HCT116 (cell line): ENCODE measurements at regions of chr15 and their contacts with region 1.

Region 1: DNA sequence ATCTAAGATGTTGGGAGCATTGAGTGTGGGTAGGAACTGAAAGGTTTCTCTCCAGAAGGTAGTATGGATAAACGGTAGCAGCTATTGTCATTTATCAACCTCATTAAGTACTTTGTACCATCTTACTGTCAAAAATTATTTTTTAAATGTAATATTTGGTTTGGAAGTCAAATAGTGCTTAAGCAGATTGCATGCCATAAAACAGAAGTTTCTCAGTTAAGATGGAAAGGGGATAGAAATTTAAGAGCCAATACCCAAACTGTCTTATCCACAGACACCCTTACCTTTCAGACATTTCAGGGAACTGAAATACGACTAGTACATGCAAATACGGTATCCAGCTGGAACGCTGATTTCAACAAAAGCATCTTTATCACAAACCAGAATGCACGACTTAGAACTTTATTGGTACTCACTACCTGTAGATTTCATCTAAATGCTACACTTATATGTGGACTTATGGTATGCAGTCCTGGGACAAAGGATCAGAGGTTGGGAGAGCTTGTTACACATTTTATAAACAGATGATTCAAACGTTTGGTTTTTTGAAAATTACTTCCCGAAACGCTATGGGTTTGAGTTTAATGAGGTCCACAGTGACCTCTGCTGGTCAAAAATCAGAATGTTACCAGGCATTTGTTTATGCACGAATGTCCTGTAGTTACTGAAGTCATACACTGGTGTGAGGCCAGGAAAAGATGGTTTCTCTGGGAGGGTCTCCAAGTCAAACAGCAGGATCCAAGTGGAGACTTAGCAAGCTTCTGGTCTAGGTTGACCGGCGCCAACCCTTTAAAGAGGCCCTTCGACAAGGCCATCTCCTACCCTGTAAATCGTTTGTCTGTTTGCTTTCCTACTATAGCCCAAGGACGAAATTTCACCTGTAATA is 45.7 kb upstream of the DUT start:
- DNase-seq: peak; percentile 72
- ATAC-seq: peak; percentile 92
- H3K4me3 ChIP-seq: peak overlapping the region; percentile 8 to 45; a peak in 2 of 4 replicates
- H3K27ac ChIP-seq: no peak overlapping the region
- H3K4me1 ChIP-seq: peaks cover 0 to 4% of the 10 kb centered on the region in 2 experiments; a peak in 1 of 4 replicates
- H3K27me3 ChIP-seq: peaks cover 20% of the 10 kb centered on the region; the same call in 1 of the 2 replicates
- CTCF ChIP-seq: peak; percentile 44 to 82 (median 61); a peak in 5 of 6 replicates
- POLR2A ChIP-seq: no peak
- RAD21 ChIP-seq: peak; percentile 48

Region 2: GRCh38 chr15:46312133-46312740 is 1973.3 kb before region 1 on chr15:
- CTCF ChIA-PET with region 1: no interaction called
- POLR2A ChIA-PET with region 1: no interaction called
- RAD21 ChIA-PET with region 1: no interaction called
- intact Hi-C with region 1: loop called (anchors 5 kb)
- DNase-seq: peak; percentile 8
- ATAC-seq: peak; percentile 53; the same call in 1 of the 2 replicates
- H3K4me3 ChIP-seq: no peak overlapping the region
- H3K27ac ChIP-seq: no peak overlapping the region
- H3K4me1 ChIP-seq: no peaks in the 10 kb centered on the region
- H3K27me3 ChIP-seq: no peaks in the 10 kb centered on the region
- CTCF ChIP-seq: peak in 2 of 3 experiments; percentile 67 to 72; a peak in 4 of 6 replicates
- POLR2A ChIP-seq: no peak
- RAD21 ChIP-seq: peak; percentile 27; the same call in 1 of the 2 replicates

Region 3: DNA sequence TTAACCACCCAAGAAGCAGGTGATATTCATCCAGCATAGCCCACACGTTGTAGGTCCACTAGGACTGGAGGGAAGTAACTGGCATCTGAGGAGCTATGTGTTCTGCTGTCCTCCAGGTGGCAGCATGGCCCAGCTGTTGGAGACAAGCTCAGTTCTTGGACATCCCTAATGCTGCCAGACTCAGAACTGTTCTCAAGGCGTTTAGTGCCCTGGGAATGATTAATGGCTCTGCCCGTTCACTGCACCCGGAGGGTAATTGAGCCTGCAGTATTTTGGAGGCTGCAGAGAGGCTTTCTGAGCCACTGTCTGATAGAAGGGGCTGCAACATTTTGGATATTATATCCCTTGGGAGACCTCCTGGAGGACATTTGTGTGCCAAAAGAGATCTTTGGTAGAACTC is 1089.5 kb before region 1 on chr15:
- CTCF ChIA-PET with region 1: interaction called, 3 read pairs
- POLR2A ChIA-PET with region 1: no interaction called
- RAD21 ChIA-PET with region 1: no interaction called
- intact Hi-C with region 1: loop called (anchors 2 kb)
- DNase-seq: peak; percentile 13
- ATAC-seq: peak; percentile 46; the same call in 1 of the 2 replicates
- H3K4me3 ChIP-seq: no peak overlapping the region
- H3K27ac ChIP-seq: no peak overlapping the region
- H3K4me1 ChIP-seq: no peaks in the 10 kb centered on the region
- H3K27me3 ChIP-seq: no peaks in the 10 kb centered on the region
- CTCF ChIP-seq: peak; percentile 4 to 47 (median 44); a peak in 4 of 6 replicates
- POLR2A ChIP-seq: no peak
- RAD21 ChIP-seq: peak; percentile 34

Region 4: DNA sequence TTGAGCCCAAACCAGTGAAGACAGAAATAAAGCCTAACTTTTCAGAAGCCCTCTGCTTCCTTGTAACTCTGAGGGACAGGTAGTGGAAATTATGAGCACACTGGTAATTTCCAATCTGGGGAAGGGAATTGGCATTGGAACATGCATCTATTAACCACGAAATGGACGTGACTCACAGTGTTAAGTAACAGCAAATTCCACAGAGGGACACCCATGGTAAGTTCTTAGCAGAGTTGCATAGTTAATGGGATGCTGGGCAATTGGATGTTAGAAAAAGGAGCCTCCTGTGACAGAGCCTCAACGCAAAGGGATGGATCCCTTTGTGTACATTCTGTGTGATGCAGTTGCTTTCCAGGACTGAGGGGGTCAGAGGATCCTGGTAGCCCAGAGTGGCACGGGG is 399.7 kb before region 1 on chr15:
- CTCF ChIA-PET with region 1: no interaction called
- POLR2A ChIA-PET with region 1: no interaction called
- RAD21 ChIA-PET with region 1: no interaction called
- intact Hi-C with region 1: no loop called
- DNase-seq: no peak
- ATAC-seq: no peak
- H3K4me3 ChIP-seq: no peak overlapping the region
- H3K27ac ChIP-seq: no peak overlapping the region
- H3K4me1 ChIP-seq: no peaks in the 10 kb centered on the region
- H3K27me3 ChIP-seq: no peaks in the 10 kb centered on the region
- CTCF ChIP-seq: no peak
- POLR2A ChIP-seq: no peak
- RAD21 ChIP-seq: no peak

Region 5: DNA sequence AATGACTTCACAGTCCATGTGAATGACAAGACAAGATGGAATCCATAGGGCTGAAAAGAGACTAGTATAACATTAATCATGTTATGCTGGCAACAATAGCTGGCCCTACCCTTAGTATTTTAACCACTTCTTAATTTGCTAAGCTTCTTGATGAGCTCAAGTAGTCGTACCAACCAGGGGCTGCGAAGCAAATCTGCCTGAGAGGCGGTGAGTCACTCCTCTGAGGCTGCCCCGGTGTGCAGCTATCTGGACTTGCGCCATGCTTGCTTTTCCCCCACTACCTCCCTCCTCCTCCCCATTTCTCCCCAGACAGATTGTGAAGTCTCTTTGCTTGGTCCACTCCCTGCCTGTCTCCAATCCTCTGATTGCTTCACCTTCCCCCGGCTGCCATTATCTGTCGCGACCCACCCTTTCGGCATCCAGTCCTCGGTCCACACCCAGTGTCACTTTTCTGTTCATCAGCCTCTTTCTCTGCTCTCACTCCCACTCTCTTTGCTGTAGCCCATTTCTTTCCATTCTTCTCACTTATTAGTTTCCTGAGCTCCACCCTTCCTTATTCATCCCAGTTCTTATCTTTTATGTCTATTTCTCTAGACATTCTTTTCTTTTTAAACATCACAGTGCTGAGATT is 88.4 kb after region 1 on chr15:
- CTCF ChIA-PET with region 1: no interaction called
- POLR2A ChIA-PET with region 1: no interaction called
- RAD21 ChIA-PET with region 1: no interaction called
- intact Hi-C with region 1: no loop called
- DNase-seq: no peak
- ATAC-seq: no peak
- H3K4me3 ChIP-seq: no peak overlapping the region
- H3K27ac ChIP-seq: no peak overlapping the region
- H3K4me1 ChIP-seq: peaks cover 0 to 9% of the 10 kb centered on the region in 2 experiments; a peak in 2 of 4 replicates
- H3K27me3 ChIP-seq: no peaks in the 10 kb centered on the region
- CTCF ChIP-seq: no peak
- POLR2A ChIP-seq: no peak
- RAD21 ChIP-seq: no peak

Region 6: DNA sequence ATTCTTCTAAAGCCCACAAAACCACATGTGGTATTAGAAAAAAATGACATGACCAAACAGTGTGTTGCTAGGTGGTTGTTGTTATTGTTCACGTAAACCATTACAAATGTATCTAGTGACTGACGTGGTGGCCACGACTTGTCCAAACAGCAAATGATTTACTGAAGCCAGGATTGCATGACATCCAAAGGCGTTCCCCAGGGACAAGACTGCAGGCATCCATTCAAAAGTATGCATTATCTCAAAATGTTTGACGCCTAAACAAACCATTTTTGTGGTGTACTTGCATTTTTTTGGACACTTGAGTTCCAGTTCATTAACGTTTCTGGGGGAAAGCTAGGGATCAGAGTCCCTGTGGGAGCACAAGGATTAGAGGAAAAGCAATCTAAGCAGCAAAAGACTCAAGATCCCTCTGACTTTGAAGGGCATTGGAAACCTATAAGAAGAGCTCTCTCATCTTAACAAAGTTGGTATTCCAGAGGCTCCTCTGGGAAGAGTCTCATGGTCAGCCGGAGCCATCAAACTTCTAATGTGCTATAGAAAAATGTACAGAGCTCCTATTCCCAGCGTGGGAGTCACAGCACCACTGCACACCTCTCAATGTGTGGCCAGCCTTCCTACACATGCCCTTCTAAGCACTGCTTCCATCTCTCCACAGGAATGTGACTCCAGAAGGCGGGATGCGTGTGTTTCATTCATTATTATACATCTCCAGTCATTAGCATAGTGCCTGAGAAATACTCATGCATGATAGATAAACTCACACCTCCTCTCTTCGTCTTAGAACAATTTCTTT is 297.1 kb after region 1 on chr15:
- CTCF ChIA-PET with region 1: no interaction called
- POLR2A ChIA-PET with region 1: no interaction called
- RAD21 ChIA-PET with region 1: no interaction called
- intact Hi-C with region 1: no loop called
- DNase-seq: no peak
- ATAC-seq: no peak
- H3K4me3 ChIP-seq: no peak overlapping the region
- H3K27ac ChIP-seq: no peak overlapping the region
- H3K4me1 ChIP-seq: no peaks in the 10 kb centered on the region
- H3K27me3 ChIP-seq: no peaks in the 10 kb centered on the region
- CTCF ChIP-seq: no peak
- POLR2A ChIP-seq: no peak
- RAD21 ChIP-seq: no peak